ENCODE measurements at regions of chr22 and their contacts with region 1.

Region 1: GRCh38 chr22:29130476-29130875 is 57.6 kb downstream of the KREMEN1 start:
- DNase-seq: no peak
- H3K4me3 ChIP-seq: no peak overlapping the region
- CTCF ChIP-seq: no peak

Region 2: GRCh38 chr22:29062286-29062821 is 68.1 kb before region 1 on chr22:
- in situ Hi-C with region 1: no loop called
- DNase-seq: no peak
- H3K4me3 ChIP-seq: no peak overlapping the region
- CTCF ChIP-seq: no peak

Region 3: DNA sequence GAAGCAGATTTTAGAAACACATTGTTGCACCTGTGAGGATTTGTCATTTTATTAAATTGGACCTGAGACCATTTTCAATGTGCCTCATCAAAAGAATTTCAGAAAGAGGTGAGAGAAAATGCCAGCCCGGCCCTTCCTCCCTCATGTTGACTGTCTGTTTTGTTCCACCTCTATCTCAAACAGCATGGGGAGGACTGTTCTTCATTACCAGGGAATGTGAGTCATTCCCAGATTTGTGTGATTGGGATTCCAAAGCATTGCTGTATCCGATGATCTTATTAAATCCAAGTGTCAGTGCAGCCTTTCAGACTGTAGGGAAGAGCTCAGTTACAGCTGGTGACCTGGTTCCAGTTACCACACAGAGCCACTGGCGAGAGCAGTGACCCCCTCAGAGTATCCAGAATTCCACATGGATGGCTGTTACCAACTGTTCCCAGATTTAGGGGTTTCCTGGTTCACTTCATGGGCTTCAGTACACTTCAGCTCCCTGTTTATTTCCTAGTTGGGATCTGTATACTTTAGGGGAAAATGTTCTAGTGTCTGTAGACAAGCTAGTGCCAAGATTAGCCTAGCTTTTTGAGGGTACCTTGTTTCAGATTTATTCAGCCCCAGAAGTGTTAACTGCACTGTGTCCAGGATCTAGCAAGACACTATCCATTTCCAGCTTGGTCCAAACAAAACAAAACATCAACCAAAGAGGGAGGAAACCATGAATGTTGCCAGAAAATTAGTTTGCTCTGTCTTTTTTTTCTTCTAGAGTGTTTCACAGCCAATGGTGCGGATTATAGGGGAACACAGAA is 36.8 kb before region 1 on chr22:
- in situ Hi-C with region 1: loop called (anchors 5 kb)
- DNase-seq: peak; percentile 43
- H3K4me3 ChIP-seq: no peak overlapping the region
- CTCF ChIP-seq: no peak

Region 4: DNA sequence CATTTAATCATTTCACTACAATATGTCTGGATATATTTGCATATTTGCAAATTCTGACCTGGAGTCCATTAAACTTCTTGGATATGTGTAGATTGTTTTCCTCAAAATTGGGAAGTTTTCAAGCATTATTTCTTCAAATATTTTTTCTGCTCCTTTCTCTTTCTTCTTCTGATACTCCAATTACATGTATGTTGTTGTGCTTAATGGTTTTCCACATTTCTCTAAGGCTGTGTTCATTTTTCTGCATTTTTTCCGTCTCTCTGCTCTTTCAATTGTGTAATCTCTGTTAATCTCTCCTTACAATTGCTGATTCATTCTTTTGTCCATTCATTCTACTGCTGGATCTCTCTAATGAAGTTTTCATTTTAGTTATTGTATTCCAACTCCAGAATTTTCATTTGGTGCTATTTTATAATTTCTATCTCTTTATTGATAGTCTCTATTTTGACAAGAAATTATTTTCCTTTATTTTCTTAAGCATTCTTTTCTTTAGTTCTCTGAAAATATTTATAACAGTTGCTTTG is 44.9 kb after region 1 on chr22:
- in situ Hi-C with region 1: no loop called
- DNase-seq: no peak
- H3K4me3 ChIP-seq: no peak overlapping the region
- CTCF ChIP-seq: no peak

Region 5: DNA sequence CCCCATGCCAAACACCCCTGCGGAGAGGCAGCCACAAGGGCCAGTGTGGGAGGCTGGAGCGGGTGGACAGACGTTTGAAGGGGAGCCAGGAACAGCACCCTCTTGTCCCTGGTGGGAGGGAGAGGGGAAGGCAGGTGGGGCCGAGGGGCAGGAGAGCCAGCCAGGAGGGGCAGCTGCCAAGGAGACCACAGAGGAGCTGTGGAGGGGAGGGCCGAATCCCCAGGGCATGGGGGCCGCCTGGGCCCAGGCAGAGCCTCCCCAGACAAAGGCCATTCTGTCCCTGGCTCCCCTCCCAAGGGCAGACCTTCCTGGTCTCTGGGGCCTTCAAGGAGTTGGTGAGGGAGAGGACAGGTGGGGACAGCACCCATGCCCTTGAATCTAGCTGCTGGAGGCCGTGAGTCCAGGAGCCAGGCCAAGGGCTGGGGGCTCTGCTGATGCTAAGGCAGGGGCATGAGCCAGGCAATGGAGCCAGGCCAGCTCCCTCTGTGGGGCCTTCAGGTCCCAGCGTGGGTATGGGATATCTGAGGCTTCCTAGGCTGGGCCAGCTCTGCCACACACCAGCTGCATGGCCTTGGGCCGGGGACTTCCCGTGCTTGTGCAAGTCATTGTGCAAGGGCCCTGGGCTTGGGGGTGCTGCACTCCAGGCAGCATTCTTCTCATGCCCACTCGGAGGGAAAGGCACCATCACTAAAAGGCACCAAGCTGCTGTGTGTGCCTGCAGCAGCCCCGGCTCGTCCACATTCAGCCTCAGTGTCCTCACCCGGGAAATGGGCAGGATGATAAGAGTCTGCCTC is 86.6 kb after region 1 on chr22:
- in situ Hi-C with region 1: no loop called
- DNase-seq: no peak
- H3K4me3 ChIP-seq: no peak overlapping the region
- CTCF ChIP-seq: no peak

Measured in astrocyte of the cerebellum (primary cell).